ENCODE measurements at regions of chr1 and their contacts with region 1.

Region 1: DNA sequence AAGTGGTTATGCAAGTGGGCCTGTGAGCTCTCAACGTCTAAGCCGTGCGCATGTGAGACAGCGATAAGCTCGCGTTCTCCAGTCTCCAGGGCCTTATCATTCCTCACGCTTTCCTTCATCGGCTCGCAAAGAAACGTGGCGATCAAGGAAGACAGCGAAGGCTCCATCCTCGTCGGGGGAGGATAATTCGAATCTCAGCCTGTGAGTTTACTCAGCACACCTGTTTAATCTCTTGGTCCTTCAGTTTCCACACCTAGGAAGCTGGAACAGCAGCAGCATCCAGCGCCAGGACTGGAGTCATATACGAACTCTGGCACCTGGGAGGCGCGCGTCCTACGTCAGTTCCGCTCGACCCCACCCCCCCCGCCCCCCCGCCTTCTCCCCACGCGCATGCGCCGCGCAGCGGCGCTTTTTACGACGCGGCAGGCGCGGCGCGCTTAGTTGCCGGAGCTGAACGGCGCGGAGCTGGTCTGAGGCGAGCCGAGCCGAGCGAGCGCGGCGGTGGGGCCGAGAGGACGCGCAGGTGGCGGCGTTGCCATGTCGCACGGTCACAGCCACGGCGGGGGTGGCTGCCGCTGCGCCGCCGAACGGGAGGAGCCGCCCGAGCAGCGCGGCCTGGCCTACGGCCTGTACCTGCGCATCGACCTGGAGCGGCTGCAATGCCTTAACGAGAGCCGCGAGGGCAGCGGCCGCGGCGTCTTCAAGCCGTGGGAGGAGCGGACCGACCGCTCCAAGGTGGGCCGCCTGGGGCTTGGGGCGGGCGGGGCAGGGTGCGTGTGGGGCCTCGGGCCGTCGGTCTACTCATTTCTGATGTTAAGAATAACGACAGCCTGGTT is at the start of gene PITHD1:
- DNase-seq: peak; percentile 59 to 91 (median 78)
- ATAC-seq: peak; percentile 81
- H3K4me3 ChIP-seq: peak within 1 kb of the TSS; percentile 88 to 99
- H3K4me3 Mint-ChIP-seq: peak within 1 kb of the TSS; percentile 94
- H3K27ac ChIP-seq: peak within 1 kb of the TSS; percentile 87 to 95
- H3K27ac Mint-ChIP-seq: peak within 1 kb of the TSS; percentile 97
- H3K4me1 ChIP-seq: peaks cover 25% of the 10 kb centered on the region
- H3K4me1 Mint-ChIP-seq: peaks cover 54% of the 10 kb centered on the region
- H3K27me3 ChIP-seq: no peaks in the 10 kb centered on the region
- H3K27me3 Mint-ChIP-seq: no peaks in the 10 kb centered on the region
- CTCF ChIP-seq: no peak
- total RNA-seq, gene PITHD1: 112 to 117 TPM

Region 2: GRCh38 chr1:23743287-23744052 is 34.7 kb before region 1 on chr1 and contains the start of gene ELOA:
- CTCF ChIA-PET with region 1: interaction called, 4 read pairs
- POLR2A ChIA-PET with region 1: interaction called, 10 read pairs
- intact Hi-C with region 1: loop called in 1 of 2 experiments (anchors 1 kb)
- DNase-seq: peak; percentile 39 to 90 (median 77)
- ATAC-seq: peak; percentile 95
- H3K4me3 ChIP-seq: peak within 1 kb of the TSS; percentile 70 to 91
- H3K4me3 Mint-ChIP-seq: peak within 1 kb of the TSS; percentile 91
- H3K27ac ChIP-seq: peak within 1 kb of the TSS; percentile 79 to 84
- H3K27ac Mint-ChIP-seq: peak within 1 kb of the TSS; percentile 93
- H3K4me1 ChIP-seq: peaks cover 34% of the 10 kb centered on the region
- H3K4me1 Mint-ChIP-seq: peaks cover 48% of the 10 kb centered on the region
- H3K27me3 ChIP-seq: no peaks in the 10 kb centered on the region
- H3K27me3 Mint-ChIP-seq: no peaks in the 10 kb centered on the region
- CTCF ChIP-seq: no peak
- total RNA-seq, gene ELOA: 41.5 to 43.3 TPM

Region 3: DNA sequence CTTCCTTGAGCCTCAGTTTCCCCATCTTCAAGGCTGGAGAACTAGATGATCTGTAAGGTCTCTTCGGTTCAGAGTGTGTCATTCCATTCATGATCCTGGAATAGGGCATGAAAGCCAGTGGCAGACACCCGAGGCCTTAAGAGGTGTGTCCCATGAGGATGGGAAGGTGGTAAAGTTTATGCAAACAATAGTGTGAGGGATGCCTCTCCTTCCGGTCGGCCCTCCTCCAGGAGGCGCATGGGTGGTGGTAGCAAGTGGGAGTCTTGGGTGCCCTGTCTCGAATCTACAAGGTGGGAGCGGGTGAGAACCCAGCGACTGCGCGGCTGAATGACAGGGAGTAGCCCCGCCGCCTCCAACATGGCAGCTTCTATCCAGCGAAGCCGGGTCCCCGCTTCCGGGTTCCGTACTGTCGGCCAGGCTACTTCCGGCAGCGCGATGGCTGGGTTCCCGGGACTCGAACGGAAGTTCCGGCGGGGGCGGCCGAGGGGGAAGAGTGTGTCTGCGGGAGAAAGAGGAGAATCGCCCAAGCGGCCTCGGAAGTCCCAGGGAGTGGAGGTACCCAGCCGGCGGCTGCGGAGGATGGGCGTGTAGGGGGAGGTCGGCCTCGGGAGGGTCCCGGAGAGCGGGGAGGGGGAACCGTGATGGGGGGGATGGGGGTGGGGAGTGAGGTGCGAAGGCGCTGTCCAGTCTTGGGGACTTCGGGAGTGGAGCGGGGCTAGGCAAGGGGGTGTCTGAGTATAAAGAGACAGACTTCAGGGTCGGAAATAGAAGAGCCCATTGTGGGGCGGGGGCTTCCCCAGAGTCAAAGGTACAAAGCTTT is 12.7 kb after region 1 on chr1 and contains the start of gene LYPLA2:
- CTCF ChIA-PET with region 1: interaction called, 3 read pairs
- POLR2A ChIA-PET with region 1: interaction called, 31 read pairs
- intact Hi-C with region 1: loop called (anchors 1 kb)
- DNase-seq: peak; percentile 64 to 93 (median 88)
- ATAC-seq: peak; percentile 88
- H3K4me3 ChIP-seq: peak within 1 kb of the TSS; percentile 72 to 80
- H3K4me3 Mint-ChIP-seq: peak within 1 kb of the TSS; percentile 95
- H3K27ac ChIP-seq: peak within 1 kb of the TSS; percentile 59 to 86
- H3K27ac Mint-ChIP-seq: peak within 1 kb of the TSS; percentile 98
- H3K4me1 ChIP-seq: peaks cover 24% of the 10 kb centered on the region
- H3K4me1 Mint-ChIP-seq: peaks cover 27% of the 10 kb centered on the region
- H3K27me3 ChIP-seq: no peaks in the 10 kb centered on the region
- H3K27me3 Mint-ChIP-seq: no peaks in the 10 kb centered on the region
- CTCF ChIP-seq: no peak
- total RNA-seq, gene LYPLA2: 39.3 to 40.4 TPM

Measured in CD8-positive, alpha-beta T cell (primary cell).